CD4-positive, alpha-beta memory T cell (primary cell): ENCODE measurements at regions of chr13 and their contacts with region 1.

Region 1: DNA sequence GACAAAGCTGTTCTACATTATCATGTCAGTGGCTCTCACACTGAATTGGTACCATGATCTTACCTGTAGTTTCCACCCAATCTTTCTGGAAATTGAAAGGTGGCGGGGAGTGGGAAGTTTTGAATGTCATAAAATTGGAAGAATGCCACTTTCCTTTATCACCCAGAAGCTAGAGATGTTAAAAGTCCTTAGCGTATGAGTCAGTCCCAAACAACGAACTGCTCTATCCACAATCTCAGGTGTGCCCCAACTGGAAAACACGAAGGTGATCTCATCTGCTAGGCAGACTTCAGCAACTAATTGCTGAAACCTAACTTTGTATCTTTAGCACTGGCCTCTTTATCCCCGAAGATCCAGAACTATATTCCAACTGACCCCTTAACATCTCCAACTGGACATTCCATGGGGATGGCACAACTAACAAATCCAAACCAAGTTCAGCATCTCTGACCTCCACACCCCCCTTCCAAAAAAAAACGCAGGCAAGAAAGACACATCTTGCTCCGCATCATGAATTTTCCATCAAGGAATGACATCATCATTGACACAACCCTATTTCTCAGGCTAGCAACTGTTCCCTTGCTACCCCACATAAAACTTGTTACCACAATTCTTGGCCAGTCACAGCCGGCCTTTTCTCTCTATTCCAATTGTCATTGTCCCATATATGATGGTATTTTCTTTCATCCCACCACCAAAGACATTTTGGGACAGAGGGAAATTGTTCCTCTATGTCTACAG is 175.4 kb downstream of the KLF12 start:
- DNase-seq: no peak
- H3K4me3 ChIP-seq: no peak overlapping the region
- H3K4me3 Mint-ChIP-seq: no peak overlapping the region
- H3K27ac ChIP-seq: no peak overlapping the region
- H3K27ac Mint-ChIP-seq: no peak overlapping the region
- H3K4me1 ChIP-seq: peaks cover 25% of the 10 kb centered on the region
- H3K4me1 Mint-ChIP-seq: peaks cover 32 to 57% (median 45%) of the 10 kb centered on the region in 4 donors
- H3K27me3 ChIP-seq: no peaks in the 10 kb centered on the region
- H3K27me3 Mint-ChIP-seq: no peaks in the 10 kb centered on the region

Region 2: GRCh38 chr13:73973156-73973555 is 14.3 kb after region 1 on chr13:
- CTCF ChIA-PET with region 1: interaction called, 3 read pairs
- POLR2A ChIA-PET with region 1: interaction called, 5 read pairs
- intact Hi-C with region 1: loop called (anchors 2 kb)
- DNase-seq: no peak
- H3K4me3 ChIP-seq: no peak overlapping the region
- H3K4me3 Mint-ChIP-seq: peak overlapping the region in 3 of 8 donors; percentile 1 to 37 (median 22)
- H3K27ac ChIP-seq: no peak overlapping the region
- H3K27ac Mint-ChIP-seq: peak overlapping the region in 3 of 7 donors; percentile 0 to 62 (median 37)
- H3K4me1 ChIP-seq: peaks cover 52% of the 10 kb centered on the region
- H3K4me1 Mint-ChIP-seq: peaks cover 67 to 85% (median 71%) of the 10 kb centered on the region in 4 donors
- H3K27me3 ChIP-seq: no peaks in the 10 kb centered on the region
- H3K27me3 Mint-ChIP-seq: no peaks in the 10 kb centered on the region

Region 3: DNA sequence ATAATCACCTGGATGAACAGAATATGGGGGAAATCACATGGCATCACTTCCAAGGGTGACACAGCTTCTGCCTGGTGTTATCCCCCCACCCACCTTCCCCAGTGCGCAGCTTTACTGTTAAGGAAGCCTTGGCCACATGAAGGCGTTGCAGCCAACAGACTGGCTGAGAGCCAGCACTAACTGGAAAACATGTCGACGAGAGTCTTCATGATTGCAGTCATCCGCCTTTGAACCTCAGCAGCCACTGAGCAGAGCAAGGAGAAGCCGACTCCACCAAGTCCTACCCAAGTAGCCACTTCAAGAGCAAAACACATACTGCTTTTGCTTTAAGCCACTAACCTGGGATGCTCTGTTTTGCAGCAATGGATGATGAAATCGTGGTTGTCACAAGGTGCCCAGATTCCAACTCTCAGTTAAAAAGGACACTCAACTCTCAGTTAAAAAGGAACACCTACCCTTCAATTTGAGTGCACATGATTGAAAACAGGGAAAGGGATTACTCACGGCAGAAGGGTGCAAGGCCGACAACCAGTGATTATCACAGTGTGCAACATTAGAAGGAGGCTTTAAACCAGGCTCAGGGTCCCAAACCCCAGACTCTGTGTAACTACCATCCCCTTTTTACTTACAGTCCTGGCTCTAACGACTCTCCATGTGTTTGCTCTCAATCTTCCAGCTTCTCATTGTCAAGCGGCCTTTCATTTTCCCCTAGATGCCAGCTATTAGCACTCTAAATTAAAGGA is 26.3 kb after region 1 on chr13:
- CTCF ChIA-PET with region 1: no interaction called
- POLR2A ChIA-PET with region 1: no interaction called
- intact Hi-C with region 1: no loop called
- DNase-seq: peak; percentile 74 to 90 (median 82)
- H3K4me3 ChIP-seq: peak overlapping the region; percentile 34 to 46
- H3K4me3 Mint-ChIP-seq: peak overlapping the region; percentile 65 to 89 (median 80)
- H3K27ac ChIP-seq: peak overlapping the region; percentile 42
- H3K27ac Mint-ChIP-seq: peak overlapping the region in 4 of 7 donors; percentile 93 to 95 (median 94)
- H3K4me1 ChIP-seq: peaks cover 76% of the 10 kb centered on the region
- H3K4me1 Mint-ChIP-seq: peaks cover 35 to 50% (median 47%) of the 10 kb centered on the region in 4 donors
- H3K27me3 ChIP-seq: no peaks in the 10 kb centered on the region
- H3K27me3 Mint-ChIP-seq: no peaks in the 10 kb centered on the region